Caco-2 (cell line): ENCODE measurements at regions of chr7 and their contacts with region 1.

Region 1: GRCh38 chr7:7352845-7353244 is 170.5 kb downstream of the C1GALT1 start:
- DNase-seq: no peak
- H3K4me3 ChIP-seq: no peak overlapping the region
- H3K4me3 Mint-ChIP-seq: no peak overlapping the region
- H3K27ac Mint-ChIP-seq: no peak overlapping the region
- H3K4me1 ChIP-seq: peaks cover 12% of the 10 kb centered on the region; the same call in 1 of the 2 replicates
- H3K4me1 Mint-ChIP-seq: peaks cover 16% of the 10 kb centered on the region
- H3K27me3 ChIP-seq: no peaks in the 10 kb centered on the region
- H3K27me3 Mint-ChIP-seq: no peaks in the 10 kb centered on the region
- CTCF ChIP-seq: peak; percentile 15 to 20

Region 2: DNA sequence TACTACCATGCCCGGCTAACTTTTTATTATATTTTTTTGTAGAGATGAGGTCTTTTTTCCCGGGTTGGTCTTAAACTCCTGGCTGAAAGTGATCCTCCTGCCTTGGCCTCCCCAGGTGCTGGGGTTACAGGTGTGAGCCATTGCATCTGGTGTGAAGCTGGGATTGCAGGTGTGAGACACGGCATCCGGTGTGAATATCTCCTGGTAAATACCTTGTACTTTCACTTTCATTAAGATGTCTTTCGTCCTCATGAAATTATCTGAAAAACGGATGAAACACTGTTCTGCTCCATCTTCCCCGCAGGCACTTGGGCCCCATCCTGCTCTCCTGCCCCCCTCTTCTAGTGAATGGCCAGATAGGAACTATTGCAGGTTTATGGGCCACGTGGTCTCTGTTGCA is 466.6 kb before region 1 on chr7:
- CTCF ChIA-PET with region 1: no interaction called
- POLR2A ChIA-PET with region 1: no interaction called
- intact Hi-C with region 1: no loop called
- DNase-seq: no peak
- H3K4me3 ChIP-seq: no peak overlapping the region
- H3K4me3 Mint-ChIP-seq: no peak overlapping the region
- H3K27ac Mint-ChIP-seq: no peak overlapping the region
- H3K4me1 ChIP-seq: no peaks in the 10 kb centered on the region
- H3K4me1 Mint-ChIP-seq: no peaks in the 10 kb centered on the region
- H3K27me3 ChIP-seq: no peaks in the 10 kb centered on the region
- H3K27me3 Mint-ChIP-seq: peaks cover 12% of the 10 kb centered on the region
- CTCF ChIP-seq: no peak

Region 3: DNA sequence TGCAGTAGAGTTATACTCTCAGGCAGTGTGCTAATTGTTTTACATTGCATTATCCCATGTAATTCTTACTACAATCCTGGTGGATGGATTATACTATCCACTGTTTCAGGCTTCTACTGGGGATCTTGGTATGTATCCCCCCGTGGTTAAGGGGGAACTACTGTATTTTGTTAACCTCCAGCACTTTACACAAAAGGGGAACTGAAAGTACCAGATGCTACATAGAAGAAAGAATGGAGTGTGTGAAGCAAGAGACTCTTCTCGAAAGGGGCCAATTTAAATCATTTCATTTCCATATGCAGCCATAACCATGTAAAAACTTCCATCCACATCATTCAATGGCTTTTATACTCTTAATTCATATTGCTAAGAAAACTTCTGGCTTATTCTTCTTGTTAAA is 101.1 kb before region 1 on chr7:
- CTCF ChIA-PET with region 1: no interaction called
- POLR2A ChIA-PET with region 1: no interaction called
- intact Hi-C with region 1: no loop called
- DNase-seq: no peak
- H3K4me3 ChIP-seq: no peak overlapping the region
- H3K4me3 Mint-ChIP-seq: no peak overlapping the region
- H3K27ac Mint-ChIP-seq: no peak overlapping the region
- H3K4me1 ChIP-seq: peaks cover 13% of the 10 kb centered on the region
- H3K4me1 Mint-ChIP-seq: peaks cover 29% of the 10 kb centered on the region
- H3K27me3 ChIP-seq: no peaks in the 10 kb centered on the region
- H3K27me3 Mint-ChIP-seq: no peaks in the 10 kb centered on the region
- CTCF ChIP-seq: no peak

Region 4: GRCh38 chr7:7265081-7265686 is 87.7 kb before region 1 on chr7:
- CTCF ChIA-PET with region 1: no interaction called
- POLR2A ChIA-PET with region 1: no interaction called
- intact Hi-C with region 1: loop called (anchors 5 kb)
- DNase-seq: no peak
- H3K4me3 ChIP-seq: no peak overlapping the region
- H3K4me3 Mint-ChIP-seq: no peak overlapping the region
- H3K27ac Mint-ChIP-seq: peak overlapping the region; percentile 97
- H3K4me1 ChIP-seq: peaks cover 58% of the 10 kb centered on the region
- H3K4me1 Mint-ChIP-seq: peaks cover 41% of the 10 kb centered on the region
- H3K27me3 ChIP-seq: no peaks in the 10 kb centered on the region; the same call in 1 of the 2 replicates
- H3K27me3 Mint-ChIP-seq: no peaks in the 10 kb centered on the region
- CTCF ChIP-seq: no peak